ENCODE measurements at regions of chr11 and their contacts with region 1.

Region 1: DNA sequence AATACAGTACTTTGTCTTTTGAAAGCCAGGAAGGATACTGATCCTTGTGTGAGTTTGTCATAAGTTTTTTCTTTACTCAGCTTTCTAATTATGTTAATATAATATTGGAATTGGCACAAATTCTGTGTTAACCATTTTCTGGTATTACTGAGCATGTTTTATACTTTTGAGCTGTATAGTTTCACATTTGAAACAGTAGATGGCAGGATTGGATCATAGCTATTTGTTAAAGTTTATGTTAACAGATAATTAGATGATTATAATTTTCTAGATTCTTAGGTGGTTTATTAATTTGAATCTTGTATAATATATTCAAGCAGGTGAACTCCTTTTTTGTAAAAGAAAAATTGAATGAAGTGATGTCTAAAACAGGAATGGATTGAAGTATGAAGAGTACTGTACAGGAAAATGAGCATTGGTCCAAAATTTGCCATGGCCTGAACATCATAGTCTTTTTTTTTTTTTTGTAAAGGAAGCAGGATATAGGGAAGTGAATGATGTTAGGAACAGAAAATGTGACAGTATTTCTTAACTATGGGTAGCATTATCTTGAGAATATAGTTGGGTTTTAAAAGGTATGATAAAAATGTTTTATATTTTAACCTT is 102.0 kb downstream of the CYP2R1 start:
- DNase-seq: peak; percentile 36
- ATAC-seq: no peak
- H3K4me3 ChIP-seq: no peak overlapping the region
- H3K27ac ChIP-seq: no peak overlapping the region
- H3K4me1 ChIP-seq: no peaks in the 10 kb centered on the region
- H3K27me3 ChIP-seq: peaks cover under 1% of the 10 kb centered on the region; the same call in 1 of the 2 replicates
- CTCF ChIP-seq: peak; percentile 69

Region 2: GRCh38 chr11:14741195-14741594 is 48.8 kb before region 1 on chr11:
- CTCF ChIA-PET with region 1: no interaction called
- POLR2A ChIA-PET with region 1: no interaction called
- intact Hi-C with region 1: no loop called
- DNase-seq: no peak
- ATAC-seq: no peak
- H3K4me3 ChIP-seq: no peak overlapping the region
- H3K27ac ChIP-seq: no peak overlapping the region
- H3K4me1 ChIP-seq: no peaks in the 10 kb centered on the region
- H3K27me3 ChIP-seq: no peaks in the 10 kb centered on the region; the same call in 1 of the 2 replicates
- CTCF ChIP-seq: no peak

Region 3: DNA sequence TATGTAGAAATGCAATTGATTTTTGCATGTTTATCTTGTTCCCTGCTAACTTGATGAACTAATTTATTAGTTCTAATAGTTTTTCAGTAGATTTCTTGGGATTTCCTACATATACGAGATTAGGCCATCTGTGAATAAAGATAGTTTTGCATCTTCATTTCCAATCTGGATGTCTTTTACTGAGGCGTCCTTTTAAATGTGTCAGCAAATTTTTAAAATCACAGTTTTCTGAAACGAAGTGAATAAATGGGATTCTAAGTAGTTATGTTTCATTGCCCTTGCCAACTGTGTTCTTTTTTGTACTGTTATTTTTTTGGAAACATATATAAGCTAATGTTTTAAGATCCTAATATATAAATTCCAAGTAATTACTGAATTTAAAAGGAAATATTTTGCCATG is 52.0 kb after region 1 on chr11:
- CTCF ChIA-PET with region 1: no interaction called
- POLR2A ChIA-PET with region 1: no interaction called
- intact Hi-C with region 1: no loop called
- DNase-seq: no peak
- ATAC-seq: no peak
- H3K4me3 ChIP-seq: no peak overlapping the region
- H3K27ac ChIP-seq: no peak overlapping the region
- H3K4me1 ChIP-seq: no peaks in the 10 kb centered on the region
- H3K27me3 ChIP-seq: no peaks in the 10 kb centered on the region
- CTCF ChIP-seq: no peak

Region 4: GRCh38 chr11:15006139-15006759 is 216.3 kb after region 1 on chr11:
- CTCF ChIA-PET with region 1: no interaction called
- POLR2A ChIA-PET with region 1: no interaction called
- intact Hi-C with region 1: loop called (anchors 1 kb)
- DNase-seq: peak; percentile 55
- ATAC-seq: peak; percentile 40; the same call in 1 of the 2 replicates
- H3K4me3 ChIP-seq: no peak overlapping the region
- H3K27ac ChIP-seq: no peak overlapping the region
- H3K4me1 ChIP-seq: no peaks in the 10 kb centered on the region
- H3K27me3 ChIP-seq: no peaks in the 10 kb centered on the region
- CTCF ChIP-seq: peak; percentile 56

Region 5: DNA sequence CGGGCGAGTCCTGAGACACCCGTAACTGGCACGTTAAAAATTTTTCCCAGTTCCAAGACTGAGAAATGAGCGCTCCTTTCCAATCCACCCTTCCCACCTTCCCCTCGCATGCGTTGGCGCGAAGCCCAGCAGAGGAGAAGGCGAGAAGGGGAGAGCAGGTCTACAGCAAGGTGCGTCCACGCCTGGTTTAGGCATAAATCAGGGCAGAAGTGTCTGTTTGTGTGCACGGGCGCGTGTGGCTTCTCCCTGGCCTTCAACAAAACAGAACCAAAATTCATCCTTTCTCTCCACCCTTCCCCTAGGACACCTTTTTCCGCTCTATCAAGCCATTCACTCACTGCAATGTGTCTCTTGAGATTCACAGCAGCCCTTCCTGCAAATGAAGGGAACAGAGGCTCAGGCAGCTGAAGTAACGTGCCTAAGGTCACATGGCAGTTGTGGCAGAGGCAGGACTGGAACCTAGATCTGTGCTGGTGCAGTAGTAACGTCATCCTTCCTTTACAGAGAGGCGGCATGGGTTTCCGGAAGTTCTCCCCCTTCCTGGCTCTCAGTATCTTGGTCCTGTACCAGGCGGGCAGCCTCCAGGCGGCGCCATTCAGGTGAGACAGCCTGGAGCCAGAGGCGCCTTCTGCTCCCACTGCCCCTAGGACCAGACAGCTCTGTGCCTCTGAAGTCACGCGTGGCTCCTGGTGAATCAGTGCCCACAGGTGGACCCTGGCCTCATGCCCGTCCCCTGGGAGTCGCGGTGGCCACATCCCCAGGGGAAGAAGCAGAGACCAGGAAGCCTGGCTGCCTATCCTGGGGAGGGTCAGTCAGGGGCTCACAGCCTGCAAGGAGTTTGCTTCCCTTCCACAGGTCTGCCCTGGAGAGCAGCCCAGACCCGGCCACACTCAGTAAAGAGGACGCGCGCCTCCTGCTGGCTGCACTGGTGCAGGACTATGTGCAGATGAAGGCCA is 284.5 kb after region 1 on chr11:
- CTCF ChIA-PET with region 1: interaction called, 5 read pairs
- POLR2A ChIA-PET with region 1: no interaction called
- intact Hi-C with region 1: loop called (anchors 5 kb)
- DNase-seq: peak; percentile 64
- ATAC-seq: peak; percentile 81
- H3K4me3 ChIP-seq: no peak overlapping the region
- H3K27ac ChIP-seq: no peak overlapping the region
- H3K4me1 ChIP-seq: no peaks in the 10 kb centered on the region
- H3K27me3 ChIP-seq: peaks cover 14% of the 10 kb centered on the region
- CTCF ChIP-seq: peak; percentile 62

Region 6: DNA sequence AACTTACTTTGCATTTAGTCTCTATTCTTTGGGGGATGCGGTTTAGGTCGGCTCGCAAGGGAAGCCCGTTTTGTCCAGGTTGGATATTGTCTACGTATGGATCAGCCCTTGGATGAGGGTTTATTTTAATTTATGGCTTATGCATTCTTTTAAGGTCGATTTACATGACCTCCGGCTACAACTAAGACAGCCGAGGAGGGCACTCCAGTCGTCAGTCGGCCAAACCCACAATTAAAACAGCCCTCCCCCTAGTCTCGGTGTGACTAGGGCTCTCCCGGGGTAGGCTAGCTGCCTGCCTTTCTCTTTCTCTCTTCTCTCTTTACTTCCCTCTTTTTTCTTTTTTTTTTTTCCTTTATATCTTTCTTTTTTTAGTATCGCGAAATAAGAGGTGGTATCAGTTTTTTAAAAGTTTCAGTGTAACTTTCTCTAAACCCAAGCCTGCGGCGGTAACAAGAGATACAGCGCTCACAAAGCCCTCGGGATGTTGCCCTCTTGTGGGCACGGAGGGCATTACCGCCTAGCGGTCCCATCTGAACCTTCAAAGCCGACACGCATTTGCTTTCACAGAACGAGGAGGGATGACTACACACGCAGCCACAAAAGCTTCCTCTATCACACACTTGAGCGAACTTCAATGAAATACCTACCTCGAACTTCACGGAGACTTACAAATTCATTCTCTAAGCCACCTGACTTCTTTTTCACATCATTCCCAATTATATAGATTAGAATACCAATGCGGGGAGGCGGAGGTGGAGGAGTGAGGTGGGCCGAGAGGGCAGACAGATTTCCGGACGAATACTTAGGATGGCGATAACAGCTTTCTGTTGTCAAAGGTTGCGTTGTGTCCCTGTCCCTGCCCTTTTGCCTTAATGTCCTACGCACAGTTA is 1816.2 kb after region 1 on chr11:
- CTCF ChIA-PET with region 1: no interaction called
- POLR2A ChIA-PET with region 1: no interaction called
- intact Hi-C with region 1: loop called (anchors 5 kb)
- DNase-seq: peak; percentile 88
- ATAC-seq: peak; percentile 84
- H3K4me3 ChIP-seq: peak overlapping the region; percentile 58
- H3K27ac ChIP-seq: no peak overlapping the region
- H3K4me1 ChIP-seq: peaks cover 8% of the 10 kb centered on the region; the same call in 1 of the 2 replicates
- H3K27me3 ChIP-seq: peaks cover 78% of the 10 kb centered on the region
- CTCF ChIP-seq: peak; percentile 85

Measured in PC-3 (cell line).